ENCODE measurements at regions of chr4 and their contacts with region 1.

Region 1: GRCh38 chr4:119735165-119735651 is 106.6 kb upstream of the PDE5A start:
- DNase-seq: peak; percentile 4
- H3K4me3 ChIP-seq: no peak overlapping the region
- H3K27ac ChIP-seq: no peak overlapping the region
- H3K4me1 ChIP-seq: peaks cover 11% of the 10 kb centered on the region
- H3K27me3 ChIP-seq: peaks cover 0 to 3% of the 10 kb centered on the region in 2 experiments
- CTCF ChIP-seq: no peak
- POLR2A ChIP-seq: no peak

Region 2: GRCh38 chr4:119748853-119749252 is 13.6 kb after region 1 on chr4:
- CTCF ChIA-PET with region 1: interaction called, 5 read pairs
- POLR2A ChIA-PET with region 1: interaction called, 10 read pairs
- dilution Hi-C with region 1: no loop called
- intact Hi-C with region 1: no loop called
- DNase-seq: no peak
- H3K4me3 ChIP-seq: no peak overlapping the region
- H3K27ac ChIP-seq: no peak overlapping the region
- H3K4me1 ChIP-seq: no peaks in the 10 kb centered on the region
- H3K27me3 ChIP-seq: peaks cover 2 to 3% of the 10 kb centered on the region in 2 experiments
- CTCF ChIP-seq: no peak
- POLR2A ChIP-seq: no peak

Measured in endothelial cell of umbilical vein (primary cell).